ENCODE measurements at regions of chr14 and their contacts with region 1.

Region 1: GRCh38 chr14:90399541-90400444 is 3.0 kb downstream of the CALM1 start:
- DNase-seq: peak; percentile 83 to 91 (median 87)
- H3K4me3 ChIP-seq: peak overlapping the region; percentile 71 to 88
- H3K4me3 Mint-ChIP-seq: peak overlapping the region; percentile 95 to 99 (median 98)
- H3K27ac ChIP-seq: peak overlapping the region; percentile 87
- H3K27ac Mint-ChIP-seq: peak overlapping the region; percentile 98 to 99 (median 99)
- H3K4me1 ChIP-seq: peaks cover 59% of the 10 kb centered on the region
- H3K4me1 Mint-ChIP-seq: peaks cover 34 to 70% (median 53%) of the 10 kb centered on the region in 4 donors
- H3K27me3 ChIP-seq: no peaks in the 10 kb centered on the region
- H3K27me3 Mint-ChIP-seq: peaks cover 0 to 5% of the 10 kb centered on the region in 2 donors

Region 2: GRCh38 chr14:90331497-90332435 is 68.0 kb before region 1 on chr14 and contains the start of gene NRDE2:
- CTCF ChIA-PET with region 1: interaction called, 3 read pairs
- POLR2A ChIA-PET with region 1: interaction called, 13 read pairs
- intact Hi-C with region 1: loop called (anchors 1 kb)
- DNase-seq: peak; percentile 85 to 87 (median 86)
- H3K4me3 ChIP-seq: peak within 1 kb of the TSS; percentile 63 to 92
- H3K4me3 Mint-ChIP-seq: peak within 1 kb of the TSS; percentile 90 to 96 (median 93)
- H3K27ac ChIP-seq: peak within 1 kb of the TSS; percentile 70
- H3K27ac Mint-ChIP-seq: peak within 1 kb of the TSS; percentile 91 to 97 (median 96)
- H3K4me1 ChIP-seq: peaks cover 15% of the 10 kb centered on the region
- H3K4me1 Mint-ChIP-seq: peaks cover 14 to 38% (median 31%) of the 10 kb centered on the region in 4 donors
- H3K27me3 ChIP-seq: no peaks in the 10 kb centered on the region
- H3K27me3 Mint-ChIP-seq: peaks cover 7% of the 10 kb centered on the region in 2 donors
- total RNA-seq, gene NRDE2: 26.3 to 32.6 TPM

Region 3: GRCh38 chr14:90368946-90369721 is 30.7 kb before region 1 on chr14:
- CTCF ChIA-PET with region 1: interaction called, 7 read pairs
- POLR2A ChIA-PET with region 1: interaction called, 9 read pairs
- intact Hi-C with region 1: loop called (anchors 1 kb)
- DNase-seq: peak in 4 of 5 donors; percentile 43 to 51 (median 44)
- H3K4me3 ChIP-seq: no peak overlapping the region
- H3K4me3 Mint-ChIP-seq: no peak overlapping the region
- H3K27ac ChIP-seq: no peak overlapping the region
- H3K27ac Mint-ChIP-seq: no peak overlapping the region
- H3K4me1 ChIP-seq: no peaks in the 10 kb centered on the region
- H3K4me1 Mint-ChIP-seq: peaks cover 0 to 2% (median 1%) of the 10 kb centered on the region in 4 donors
- H3K27me3 ChIP-seq: no peaks in the 10 kb centered on the region
- H3K27me3 Mint-ChIP-seq: no peaks in the 10 kb centered on the region

Region 4: DNA sequence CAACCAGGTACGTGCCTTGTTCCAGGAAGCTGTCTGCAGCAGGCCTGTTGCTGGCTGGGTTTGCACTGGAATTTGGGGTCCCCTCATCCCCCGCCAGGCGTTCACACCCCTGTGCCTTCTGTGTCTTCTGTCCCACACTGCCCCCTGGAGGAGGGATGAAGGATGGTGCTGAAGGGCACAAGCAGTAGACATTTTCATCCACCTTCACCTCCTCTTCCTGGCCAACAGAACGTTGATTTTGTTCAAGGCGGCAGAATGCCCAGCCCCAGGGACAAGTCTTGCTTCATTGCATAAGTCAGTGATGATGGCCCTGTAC is 119.1 kb after region 1 on chr14:
- CTCF ChIA-PET with region 1: interaction called, 7 read pairs
- POLR2A ChIA-PET with region 1: no interaction called
- intact Hi-C with region 1: loop called (anchors 1 kb)
- DNase-seq: peak in 4 of 5 donors; percentile 39 to 53 (median 48)
- H3K4me3 ChIP-seq: no peak overlapping the region
- H3K4me3 Mint-ChIP-seq: peak overlapping the region in 1 of 8 donors; percentile 36
- H3K27ac ChIP-seq: no peak overlapping the region
- H3K27ac Mint-ChIP-seq: peak overlapping the region in 1 of 7 donors; percentile 7
- H3K4me1 ChIP-seq: no peaks in the 10 kb centered on the region
- H3K4me1 Mint-ChIP-seq: no peaks in the 10 kb centered on the region
- H3K27me3 ChIP-seq: no peaks in the 10 kb centered on the region
- H3K27me3 Mint-ChIP-seq: peaks cover 2 to 4% of the 10 kb centered on the region in 2 donors

Region 5: DNA sequence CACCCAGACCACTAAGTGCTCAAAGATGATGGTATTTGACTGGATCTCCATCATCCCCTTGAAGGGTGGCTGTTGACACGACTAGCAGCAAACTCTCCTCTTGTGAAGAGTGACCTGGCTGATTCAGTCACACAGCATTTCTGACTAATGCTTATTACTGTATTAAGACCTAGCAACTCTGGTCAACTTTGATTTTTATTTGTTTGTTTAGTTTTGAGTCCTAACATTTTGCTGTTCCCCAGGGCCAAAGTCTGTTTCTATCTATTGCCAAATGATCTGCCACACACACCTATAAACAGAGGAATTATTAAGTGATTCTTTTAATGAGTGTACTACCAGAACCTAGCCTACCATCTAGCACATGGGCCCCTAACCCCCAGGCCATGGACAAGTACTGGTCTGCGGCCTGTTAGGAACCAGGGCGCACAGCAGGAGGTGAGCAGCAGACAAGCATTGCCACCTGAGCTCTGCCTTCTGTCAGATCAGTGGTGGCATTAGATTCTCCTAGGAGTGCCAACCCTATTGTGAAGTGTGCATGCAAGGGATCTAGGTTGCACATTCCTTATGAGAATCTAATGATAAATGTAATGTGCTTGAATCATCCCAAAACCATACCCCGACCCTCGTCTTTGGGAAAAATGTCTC is 540.6 kb after region 1 on chr14:
- CTCF ChIA-PET with region 1: no interaction called
- POLR2A ChIA-PET with region 1: no interaction called
- intact Hi-C with region 1: no loop called
- DNase-seq: no peak
- H3K4me3 ChIP-seq: no peak overlapping the region
- H3K4me3 Mint-ChIP-seq: no peak overlapping the region
- H3K27ac ChIP-seq: no peak overlapping the region
- H3K27ac Mint-ChIP-seq: no peak overlapping the region
- H3K4me1 ChIP-seq: no peaks in the 10 kb centered on the region
- H3K4me1 Mint-ChIP-seq: peaks cover 0 to 6% (median 3%) of the 10 kb centered on the region in 4 donors
- H3K27me3 ChIP-seq: no peaks in the 10 kb centered on the region
- H3K27me3 Mint-ChIP-seq: no peaks in the 10 kb centered on the region

Measured in CD4-positive, alpha-beta memory T cell (primary cell).